Breast epithelium (tissue), 4 donors: ENCODE measurements at regions of chr3 and their contacts with region 1.

Region 1: DNA sequence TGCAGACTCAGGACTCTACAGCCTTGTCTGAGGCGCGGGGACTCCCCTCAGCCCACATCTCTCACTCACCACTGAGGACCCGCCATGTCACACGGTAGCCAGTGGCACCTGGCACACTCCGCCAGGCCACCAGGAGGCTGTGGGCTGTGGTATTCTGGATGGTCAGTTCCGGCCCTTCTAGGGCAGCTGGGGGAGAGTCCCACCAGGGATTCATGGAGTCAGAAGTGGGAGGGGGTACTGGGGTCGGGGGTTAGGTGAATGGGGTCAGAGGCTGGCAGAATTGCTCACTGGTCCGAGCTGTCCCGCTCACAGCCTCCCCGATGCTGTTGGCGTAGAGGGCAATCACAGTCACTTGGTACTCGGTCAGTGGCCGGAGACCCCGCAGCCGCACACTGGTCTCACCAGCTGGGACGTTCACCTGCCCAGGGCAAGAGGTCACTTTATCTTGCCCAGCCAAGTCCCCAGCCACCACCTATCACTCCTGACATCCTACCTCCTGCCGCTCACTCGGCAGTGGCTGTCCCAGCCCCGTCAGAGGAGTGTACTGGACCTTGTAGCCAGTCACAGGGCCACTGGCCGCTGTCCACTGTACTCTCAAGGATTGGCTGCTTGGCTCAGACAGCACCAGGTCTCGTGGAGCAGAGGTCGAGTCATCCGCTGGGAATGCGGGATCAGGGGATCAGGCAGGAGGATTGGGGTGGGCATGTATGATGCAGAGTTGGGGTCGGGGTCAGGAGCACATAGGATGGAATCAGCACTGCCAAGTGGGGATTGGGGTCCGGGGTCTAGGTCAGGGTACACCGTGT is 2.6 kb downstream of the COL7A1 start:
- DNase-seq: no peak
- H3K4me3 ChIP-seq: no peak overlapping the region
- H3K27ac ChIP-seq: no peak overlapping the region
- H3K4me1 ChIP-seq: peaks cover 0 to 6% of the 10 kb centered on the region in 2 donors
- H3K27me3 ChIP-seq: peaks cover 0 to 2% of the 10 kb centered on the region in 2 donors
- CTCF ChIP-seq: no peak
- POLR2A ChIP-seq: no peak

Region 2: DNA sequence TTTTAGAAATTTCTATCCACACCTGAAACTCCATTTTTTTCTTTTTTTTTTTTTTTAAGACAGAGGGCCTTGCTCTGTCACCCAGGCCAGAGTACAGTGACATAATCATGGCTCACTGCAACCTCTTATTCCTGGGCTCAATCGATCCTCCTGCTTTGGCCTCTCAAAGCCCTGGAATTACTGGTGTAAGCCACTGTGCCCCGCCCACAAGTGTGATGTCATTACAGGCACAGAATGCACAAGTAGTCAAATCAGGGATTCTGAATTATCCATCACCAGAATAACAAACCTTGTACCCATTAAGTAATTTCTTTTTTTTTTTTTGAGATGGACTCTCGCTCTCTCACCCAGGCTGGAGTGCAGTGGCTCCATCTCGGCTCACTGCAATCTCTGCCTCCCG is 15.0 kb after region 1 on chr3:
- intact Hi-C with region 1: loop called (anchors 1 kb)
- DNase-seq: no peak
- H3K4me3 ChIP-seq: no peak overlapping the region
- H3K27ac ChIP-seq: no peak overlapping the region
- H3K4me1 ChIP-seq: peaks cover 4 to 11% of the 10 kb centered on the region in 2 donors
- H3K27me3 ChIP-seq: no peaks in the 10 kb centered on the region
- CTCF ChIP-seq: no peak
- POLR2A ChIP-seq: no peak